ENCODE measurements at regions of chr5 and their contacts with region 1.

Region 1: GRCh38 chr5:32174011-32174870 is at the start of gene GOLPH3:
- DNase-seq: peak; percentile 97
- total RNA-seq, gene GOLPH3: 52.0 TPM

Region 2: GRCh38 chr5:32098291-32098690 is 76.0 kb before region 1 on chr5:
- intact Hi-C with region 1: loop called (anchors 2 kb)
- DNase-seq: no peak

Region 3: GRCh38 chr5:32193591-32193990 is 19.4 kb after region 1 on chr5:
- intact Hi-C with region 1: loop called (anchors 2 kb)
- DNase-seq: peak; percentile 89

Region 4: GRCh38 chr5:32232441-32233219 is 58.4 kb after region 1 on chr5:
- intact Hi-C with region 1: loop called (anchors 5 kb)
- DNase-seq: peak; percentile 81

Region 5: DNA sequence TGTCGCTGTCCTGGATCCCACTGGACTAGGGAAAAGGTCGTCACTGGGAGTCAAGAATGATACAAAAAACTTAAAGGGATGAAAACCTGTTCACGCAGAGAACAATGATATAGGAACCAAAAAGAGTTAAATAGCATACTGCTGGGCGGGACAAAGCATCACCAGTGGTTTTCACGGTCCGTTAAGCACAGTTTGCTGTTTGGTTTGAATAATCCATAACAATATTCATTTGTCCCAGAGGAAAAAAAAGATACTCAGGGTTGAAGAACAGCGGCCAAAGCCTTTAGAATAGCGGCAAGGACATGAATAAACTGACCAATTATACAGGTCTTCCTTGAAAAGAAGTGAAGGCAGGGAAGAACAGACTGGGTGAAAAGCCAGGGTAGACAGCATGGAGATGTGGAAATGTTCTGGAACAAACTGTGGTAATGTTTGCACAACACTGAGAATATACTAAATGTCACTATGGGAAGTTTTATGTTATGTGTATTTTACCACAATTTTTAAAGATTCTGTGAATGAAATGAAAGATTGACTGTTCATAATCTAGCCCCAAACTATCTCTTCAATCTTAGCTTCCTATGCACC is 77.7 kb after region 1 on chr5:
- intact Hi-C with region 1: no loop called
- DNase-seq: no peak

Region 6: GRCh38 chr5:32312647-32313523 is 138.6 kb after region 1 on chr5 and contains the start of gene MTMR12:
- intact Hi-C with region 1: loop called (anchors 5 kb)
- DNase-seq: peak; percentile 100
- total RNA-seq, gene MTMR12: 27.2 TPM

Region 7: GRCh38 chr5:32585446-32586275 is 411.4 kb after region 1 on chr5 and contains the start of gene SUB1:
- intact Hi-C with region 1: loop called (anchors 5 kb)
- DNase-seq: peak; percentile 97
- total RNA-seq, gene SUB1: 180 TPM